ENCODE measurements at regions of chr1 and their contacts with region 1.

Region 1: DNA sequence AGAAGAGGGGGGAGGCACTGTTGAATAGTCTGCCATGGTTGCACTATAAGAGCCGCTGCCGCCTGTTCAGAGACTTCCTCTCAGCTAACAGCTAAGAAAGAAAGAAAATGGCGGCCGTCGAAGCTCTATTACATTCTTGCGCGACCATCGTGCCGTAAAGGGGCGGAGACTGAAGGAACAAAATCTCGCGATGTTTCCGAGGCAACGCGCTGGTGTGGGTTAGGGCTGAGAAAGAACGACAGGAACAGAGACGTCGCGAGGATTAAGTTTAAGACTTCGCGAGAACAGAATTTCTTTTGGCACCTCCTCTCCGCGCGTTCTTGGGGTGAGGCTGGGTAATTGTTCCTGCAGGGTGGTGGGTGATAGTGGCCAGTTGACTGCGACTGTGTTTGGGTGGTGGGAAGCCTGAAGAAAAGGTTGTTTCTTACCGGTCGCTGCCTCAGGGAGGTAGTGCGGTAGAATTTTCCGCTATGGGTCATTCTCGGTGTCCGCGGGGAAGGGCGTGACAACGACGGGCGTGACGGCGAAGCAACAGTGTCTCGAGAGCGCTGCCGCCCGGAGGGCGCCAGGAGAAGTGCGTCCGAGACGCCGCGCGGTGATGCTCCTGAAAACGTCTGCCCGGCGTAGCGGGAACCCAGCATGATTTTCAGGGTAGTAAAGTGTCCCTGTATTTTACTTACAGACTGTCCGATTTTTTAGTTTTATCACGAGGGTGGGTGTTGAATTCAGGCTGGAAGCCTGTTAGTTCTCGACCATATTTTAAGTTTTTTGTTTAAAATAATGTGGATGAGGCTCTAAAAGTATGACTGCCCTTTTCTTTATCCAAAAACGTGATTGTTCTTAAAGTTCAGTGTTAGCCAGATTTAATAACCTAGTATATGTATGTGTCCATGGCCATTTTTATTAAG is at the start of gene FUBP1:
- DNase-seq: peak; percentile 97
- ATAC-seq: peak; percentile 81
- H3K4me3 Mint-ChIP-seq: no peak within 1 kb of the TSS
- H3K27ac Mint-ChIP-seq: no peak within 1 kb of the TSS
- H3K4me1 Mint-ChIP-seq: peaks cover 47% of the 10 kb centered on the region
- H3K27me3 Mint-ChIP-seq: no peaks in the 10 kb centered on the region
- total RNA-seq, gene FUBP1: 240 to 258 TPM

Region 2: DNA sequence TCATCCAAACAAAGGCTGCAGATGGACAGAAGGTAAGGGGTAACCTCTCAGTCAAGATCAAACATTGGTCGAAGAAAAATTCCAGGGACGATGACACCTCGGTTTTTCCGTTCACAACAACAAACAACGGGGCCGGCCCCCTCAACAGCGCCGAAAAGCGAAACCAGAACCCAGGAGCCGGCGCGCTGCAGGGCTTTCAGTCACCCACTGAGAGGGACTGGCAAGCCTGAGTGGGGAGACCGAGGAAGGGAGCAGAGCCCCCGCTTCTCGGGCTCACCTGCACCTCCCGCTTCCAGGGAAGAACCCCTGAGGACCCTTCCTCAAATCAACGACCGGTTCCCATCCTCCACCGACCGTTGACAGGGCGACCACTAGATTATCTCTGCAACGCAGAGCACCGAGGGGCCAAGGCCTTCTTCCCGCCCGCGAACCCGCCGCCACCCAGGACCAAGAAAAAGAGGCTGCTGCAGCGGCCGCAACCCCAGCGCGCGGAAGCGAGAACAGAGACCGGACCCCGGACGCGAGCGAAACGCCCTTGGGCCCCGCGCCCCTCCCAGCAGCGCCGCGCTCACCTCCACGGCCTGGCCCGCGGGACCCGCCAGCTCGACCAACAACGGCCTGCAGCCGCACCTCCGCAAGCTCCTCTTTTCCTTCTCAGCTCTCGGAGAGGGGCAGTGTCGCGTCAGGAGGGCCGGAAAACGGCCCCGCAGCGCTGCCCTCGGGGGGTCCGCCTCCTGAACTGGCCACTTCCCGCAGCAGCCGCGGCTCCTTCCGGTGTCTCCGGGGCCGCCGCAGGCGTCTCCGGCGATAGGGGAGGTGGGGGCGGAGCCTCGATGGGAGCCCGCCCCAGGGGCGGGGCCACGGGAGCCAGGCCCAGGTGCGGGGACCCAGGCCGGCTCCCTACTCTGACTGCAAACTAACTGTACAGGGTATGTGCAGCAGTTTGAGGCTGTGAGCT is 219.9 kb before region 1 on chr1 and contains the start of gene USP33:
- CTCF ChIA-PET with region 1: interaction called, 3 read pairs
- POLR2A ChIA-PET with region 1: no interaction called
- intact Hi-C with region 1: loop called in 1 of 2 experiments (anchors 1 kb)
- DNase-seq: peak; percentile 95
- ATAC-seq: peak; percentile 98
- H3K4me3 Mint-ChIP-seq: peak within 1 kb of the TSS; percentile 89
- H3K27ac Mint-ChIP-seq: peak within 1 kb of the TSS; percentile 92
- H3K4me1 Mint-ChIP-seq: peaks cover 41% of the 10 kb centered on the region
- H3K27me3 Mint-ChIP-seq: no peaks in the 10 kb centered on the region
- total RNA-seq, gene USP33: 36.3 to 36.8 TPM

Region 3: DNA sequence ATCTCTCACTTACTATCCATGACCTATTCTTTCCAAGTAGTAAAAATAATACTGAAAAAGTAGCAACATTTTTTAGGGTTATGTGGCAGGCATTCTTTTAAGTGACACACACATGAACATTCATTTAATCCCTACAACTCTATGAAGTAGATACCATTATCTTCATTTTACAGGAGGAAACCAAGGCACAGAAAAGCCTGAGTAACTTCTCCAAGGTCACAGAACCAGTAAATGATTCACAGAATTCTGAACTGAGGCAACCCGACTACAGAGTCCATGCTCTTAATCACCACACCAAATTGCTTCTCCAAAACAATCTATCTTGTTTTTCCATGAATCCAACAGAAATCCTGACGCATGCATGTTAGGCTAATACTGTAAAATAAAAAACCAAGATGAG is 17.8 kb before region 1 on chr1:
- CTCF ChIA-PET with region 1: interaction called, 3 read pairs
- POLR2A ChIA-PET with region 1: interaction called, 10 read pairs
- intact Hi-C with region 1: loop called in 1 of 2 experiments (anchors 2 kb)
- DNase-seq: no peak
- ATAC-seq: peak; percentile 76
- H3K4me3 Mint-ChIP-seq: no peak overlapping the region
- H3K27ac Mint-ChIP-seq: peak overlapping the region; percentile 67
- H3K4me1 Mint-ChIP-seq: peaks cover 47% of the 10 kb centered on the region
- H3K27me3 Mint-ChIP-seq: no peaks in the 10 kb centered on the region

Region 4: DNA sequence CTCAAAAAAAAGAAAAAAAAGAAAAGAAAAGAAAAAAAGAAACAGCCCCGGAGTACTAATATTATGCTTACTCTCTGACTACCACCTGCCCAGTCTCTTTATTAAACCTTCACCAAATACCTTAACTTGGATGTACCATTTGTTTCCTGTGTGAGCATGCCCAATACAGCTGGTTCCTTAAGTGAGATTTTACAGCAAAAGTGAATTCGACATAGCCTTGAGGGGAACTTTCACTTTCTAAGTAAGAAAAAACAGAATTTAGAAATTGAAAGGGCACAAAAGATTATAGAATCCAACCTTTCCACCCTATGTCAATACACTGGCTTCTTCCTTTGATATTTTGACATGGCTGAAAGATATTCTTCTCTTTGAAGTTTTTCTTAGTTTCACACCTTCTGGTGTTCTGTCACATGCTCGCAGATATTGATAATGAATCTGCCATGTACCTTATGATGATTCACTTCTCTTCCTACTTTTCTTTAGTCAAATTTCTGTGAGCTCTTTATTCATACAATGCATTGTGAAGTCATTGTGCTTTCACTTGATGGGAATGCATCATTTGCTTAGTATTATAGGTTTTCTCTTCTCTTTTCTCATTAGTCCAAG is 61.4 kb after region 1 on chr1:
- CTCF ChIA-PET with region 1: interaction called, 5 read pairs
- POLR2A ChIA-PET with region 1: interaction called, 4 read pairs
- intact Hi-C with region 1: loop called (anchors 2 to 5 kb)
- DNase-seq: no peak
- ATAC-seq: peak; percentile 89
- H3K4me3 Mint-ChIP-seq: peak overlapping the region; percentile 49
- H3K27ac Mint-ChIP-seq: peak overlapping the region; percentile 79
- H3K4me1 Mint-ChIP-seq: peaks cover 23% of the 10 kb centered on the region
- H3K27me3 Mint-ChIP-seq: peaks cover 12% of the 10 kb centered on the region

Region 5: DNA sequence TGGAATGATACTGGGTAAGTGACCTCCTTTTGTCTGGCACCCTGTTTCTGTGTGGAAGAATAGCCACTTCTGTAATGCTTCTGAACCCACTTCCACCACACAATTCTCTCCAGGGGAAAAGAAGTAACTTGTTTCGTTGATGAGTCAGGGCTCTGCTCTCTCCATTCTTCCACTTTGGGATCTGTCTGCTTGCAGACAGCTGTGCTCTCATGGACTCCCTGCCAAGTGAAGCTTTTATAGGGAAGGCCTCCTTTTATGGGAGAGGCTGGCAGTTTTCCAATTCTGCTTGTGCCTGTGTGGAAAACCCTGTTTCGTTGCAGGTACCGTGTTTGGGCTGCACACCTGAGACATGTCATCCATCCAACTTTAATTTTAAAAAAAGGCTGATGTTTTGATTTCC is 197.2 kb after region 1 on chr1:
- CTCF ChIA-PET with region 1: no interaction called
- POLR2A ChIA-PET with region 1: no interaction called
- intact Hi-C with region 1: no loop called
- DNase-seq: no peak
- ATAC-seq: no peak
- H3K4me3 Mint-ChIP-seq: no peak overlapping the region
- H3K27ac Mint-ChIP-seq: no peak overlapping the region
- H3K4me1 Mint-ChIP-seq: peaks cover 6% of the 10 kb centered on the region
- H3K27me3 Mint-ChIP-seq: peaks cover 4% of the 10 kb centered on the region

Region 6: DNA sequence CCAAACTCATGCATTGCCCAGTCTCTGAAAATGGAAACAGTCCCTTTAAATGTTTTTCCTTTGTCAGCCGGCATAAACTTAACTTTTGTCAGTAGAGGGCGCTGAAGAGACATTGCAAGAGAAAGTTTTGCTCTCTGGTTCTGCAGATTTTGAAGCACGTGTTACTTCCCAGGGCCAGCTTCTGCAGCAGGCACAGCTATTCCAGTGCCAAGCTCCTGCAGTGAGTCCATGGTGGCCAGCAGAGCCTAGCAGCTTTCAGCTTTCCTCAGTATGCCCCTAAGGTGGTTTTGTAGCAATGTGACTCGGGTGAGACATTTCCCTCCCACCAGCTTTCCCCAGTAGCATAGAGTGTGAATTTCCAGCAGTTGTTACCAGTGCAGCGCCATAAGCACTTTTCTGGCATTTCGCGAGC is 638.4 kb after region 1 on chr1:
- CTCF ChIA-PET with region 1: no interaction called
- POLR2A ChIA-PET with region 1: no interaction called
- intact Hi-C with region 1: loop called in 1 of 2 experiments (anchors 2 kb)
- DNase-seq: peak; percentile 66
- ATAC-seq: peak; percentile 62
- H3K4me3 Mint-ChIP-seq: no peak overlapping the region
- H3K27ac Mint-ChIP-seq: peak overlapping the region; percentile 47
- H3K4me1 Mint-ChIP-seq: peaks cover 34% of the 10 kb centered on the region
- H3K27me3 Mint-ChIP-seq: no peaks in the 10 kb centered on the region